Activated CD4-positive, alpha-beta T cell treated with anti-CD3 and anti-CD28 coated beads, Interleukin-2, amount 10 ng/mL, durations not matched to agents 24 days and 14 days (primary cell): ENCODE measurements at regions of chr15 and their contacts with region 1.

Region 1: DNA sequence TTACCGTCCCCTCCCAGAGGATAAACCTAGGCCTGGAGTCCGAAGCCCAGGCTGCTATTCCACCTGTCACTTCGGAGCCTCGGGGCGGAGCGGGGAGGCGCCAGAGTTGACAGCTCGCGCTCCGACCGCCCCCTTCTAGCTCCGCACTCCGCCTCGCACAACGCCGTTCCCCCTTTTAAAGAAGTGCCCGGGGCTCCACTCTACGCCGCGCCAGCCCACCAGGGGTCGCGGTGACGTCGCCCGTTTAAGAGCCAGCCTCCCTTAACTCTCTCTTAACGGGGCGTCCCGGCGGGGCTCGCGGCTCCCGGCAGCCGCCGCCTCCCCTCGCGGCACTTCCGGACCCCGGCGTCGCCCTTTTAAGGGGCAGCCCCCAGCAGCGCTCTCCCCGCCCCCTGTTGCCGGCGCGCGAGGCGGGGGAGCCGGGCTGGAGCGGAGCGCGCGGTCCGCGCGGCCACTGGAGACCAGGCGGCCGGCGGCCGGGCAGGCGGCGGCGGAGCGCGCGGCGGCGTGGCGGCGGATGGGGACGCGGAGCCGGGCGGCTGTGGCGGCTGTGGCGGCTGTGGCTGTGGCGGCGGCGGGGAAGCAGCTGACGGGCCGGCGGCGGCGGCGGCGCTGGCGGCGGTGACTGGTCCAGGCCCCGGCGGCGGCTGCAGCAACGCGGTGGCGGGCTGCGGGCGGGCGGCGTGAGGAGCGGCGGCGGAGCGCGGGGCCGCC is at the start of gene INAFM2:
- DNase-seq: peak; percentile 97
- H3K4me3 Mint-ChIP-seq: peak within 1 kb of the TSS; percentile 82
- H3K27ac Mint-ChIP-seq: no peak within 1 kb of the TSS
- H3K4me1 Mint-ChIP-seq: peaks cover 31% of the 10 kb centered on the region
- H3K27me3 Mint-ChIP-seq: peaks cover 16% of the 10 kb centered on the region
- total RNA-seq, gene INAFM2: 22.8 and 23.3 TPM in 2 replicates

Region 2: DNA sequence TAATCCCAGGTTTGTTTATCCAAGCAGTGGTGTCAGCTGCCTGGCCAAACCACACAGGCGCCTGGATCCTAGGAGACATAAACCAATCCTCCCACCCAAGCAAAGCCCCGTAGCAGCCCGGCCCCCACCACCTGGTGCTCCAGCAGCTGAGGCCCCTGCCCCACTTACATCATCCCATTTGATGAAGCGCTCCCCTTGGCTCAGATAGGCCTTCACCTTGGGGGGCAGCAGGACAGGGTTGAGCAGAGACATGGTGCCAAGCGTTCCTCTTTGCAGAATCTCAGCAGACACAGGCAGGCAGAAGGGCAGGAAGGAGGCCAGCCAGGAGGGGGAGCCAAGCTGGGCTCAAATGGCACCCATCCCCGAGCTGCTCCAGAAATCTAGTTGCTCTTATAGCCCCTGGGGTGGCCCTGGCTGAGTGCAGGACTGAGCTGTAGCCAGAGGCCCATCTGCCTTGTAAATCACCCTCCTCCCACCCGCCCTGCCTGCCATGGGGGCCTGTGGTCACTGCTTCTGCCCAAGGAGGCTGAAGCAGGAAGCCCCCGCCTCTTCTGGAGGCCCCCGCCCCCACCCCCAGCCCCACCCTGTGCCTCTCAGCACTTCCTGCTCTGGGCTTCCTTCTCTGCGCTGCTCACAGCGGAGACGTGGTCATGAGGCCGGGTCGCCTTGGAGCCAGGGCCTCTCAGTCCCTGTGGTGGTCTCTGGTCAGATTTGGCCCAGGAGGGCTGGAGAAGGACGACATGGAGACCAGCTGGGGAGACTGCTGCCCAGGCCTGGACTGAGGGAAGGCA is 15.8 kb before region 1 on chr15 and contains the start of gene PLCB2:
- intact Hi-C with region 1: loop called (anchors 1 kb)
- DNase-seq: peak; percentile 91
- H3K4me3 Mint-ChIP-seq: peak within 1 kb of the TSS; percentile 92
- H3K27ac Mint-ChIP-seq: peak within 1 kb of the TSS; percentile 98
- H3K4me1 Mint-ChIP-seq: peaks cover 31% of the 10 kb centered on the region
- H3K27me3 Mint-ChIP-seq: peaks cover 11% of the 10 kb centered on the region
- total RNA-seq, gene PLCB2: 82.7 and 95.7 TPM in 2 replicates

Region 3: GRCh38 chr15:40338041-40338657 is 14.8 kb after region 1 on chr15:
- intact Hi-C with region 1: loop called (anchors 1 kb)
- DNase-seq: peak; percentile 94
- H3K4me3 Mint-ChIP-seq: no peak overlapping the region
- H3K27ac Mint-ChIP-seq: no peak overlapping the region
- H3K4me1 Mint-ChIP-seq: peaks cover 13% of the 10 kb centered on the region
- H3K27me3 Mint-ChIP-seq: no peaks in the 10 kb centered on the region

Region 4: GRCh38 chr15:40421246-40422157 is 98.1 kb after region 1 on chr15:
- intact Hi-C with region 1: loop called (anchors 5 kb)
- DNase-seq: peak; percentile 96
- H3K4me3 Mint-ChIP-seq: no peak overlapping the region
- H3K27ac Mint-ChIP-seq: no peak overlapping the region
- H3K4me1 Mint-ChIP-seq: no peaks in the 10 kb centered on the region
- H3K27me3 Mint-ChIP-seq: no peaks in the 10 kb centered on the region

Region 5: GRCh38 chr15:40660686-40661085 is 337.3 kb after region 1 on chr15:
- intact Hi-C with region 1: no loop called
- DNase-seq: no peak
- H3K4me3 Mint-ChIP-seq: no peak overlapping the region
- H3K27ac Mint-ChIP-seq: peak overlapping the region; percentile 37
- H3K4me1 Mint-ChIP-seq: no peaks in the 10 kb centered on the region
- H3K27me3 Mint-ChIP-seq: no peaks in the 10 kb centered on the region